Astrocyte of the cerebellum (primary cell): ENCODE measurements at regions of chr14 and their contacts with region 1.

Region 1: GRCh38 chr14:100239840-100240724 is 1.1 kb downstream of the YY1 start:
- DNase-seq: peak; percentile 90
- H3K4me3 ChIP-seq: peak overlapping the region; percentile 84
- CTCF ChIP-seq: peak; percentile 44

Region 2: GRCh38 chr14:100281286-100282082 is 41.4 kb after region 1 on chr14:
- in situ Hi-C with region 1: loop called (anchors 5 kb)
- DNase-seq: no peak
- H3K4me3 ChIP-seq: no peak overlapping the region
- CTCF ChIP-seq: no peak